ENCODE measurements at regions of chr6 and their contacts with region 1.

Region 1: DNA sequence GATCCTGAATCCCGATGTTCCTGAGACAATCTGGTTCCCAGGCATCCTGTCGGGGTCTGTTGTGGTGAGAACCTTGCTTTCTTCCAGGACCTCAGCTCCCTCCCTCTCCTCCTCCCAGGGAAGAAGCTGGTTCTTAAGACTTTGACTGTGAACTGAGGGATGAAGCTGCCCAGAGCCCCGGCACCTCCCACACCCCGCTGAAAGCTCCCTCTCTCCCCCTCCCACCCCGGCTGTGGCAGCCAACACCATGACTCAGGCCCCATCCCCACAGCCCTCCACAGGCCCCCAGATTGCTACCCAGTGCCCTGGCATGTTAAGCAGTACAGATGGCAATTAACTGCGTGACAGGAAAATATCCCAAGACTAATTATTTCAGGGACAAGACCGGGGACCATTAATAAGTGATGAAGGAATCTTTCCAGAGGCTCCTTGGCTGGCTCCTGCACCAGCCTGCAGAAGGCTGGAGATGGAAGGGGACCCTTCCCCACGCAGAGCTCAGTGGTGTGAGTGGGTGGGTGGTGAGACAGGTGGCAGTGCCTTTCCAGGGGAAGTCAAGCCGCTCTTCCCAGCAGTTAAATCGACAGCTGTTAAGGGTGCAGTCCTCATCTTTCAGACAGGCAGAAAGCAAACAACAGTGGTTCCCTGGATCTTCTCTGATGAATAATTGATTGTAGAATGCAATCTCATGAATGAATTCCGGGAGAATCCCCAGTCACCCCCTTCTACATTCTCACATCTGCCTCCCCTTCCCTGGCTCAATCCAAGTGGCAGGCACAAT is 237.9 kb downstream of the LRFN2 start:
- DNase-seq: no peak
- ATAC-seq: no peak
- H3K4me3 ChIP-seq: no peak overlapping the region
- H3K27ac ChIP-seq: no peak overlapping the region
- H3K4me1 ChIP-seq: peaks cover 17% of the 10 kb centered on the region
- H3K27me3 ChIP-seq: no peaks in the 10 kb centered on the region
- CTCF ChIP-seq: no peak

Region 2: GRCh38 chr6:40387127-40387870 is 38.0 kb after region 1 on chr6:
- intact Hi-C with region 1: loop called in 1 of 2 experiments (anchors 5 kb)
- DNase-seq: no peak
- ATAC-seq: no peak
- H3K4me3 ChIP-seq: no peak overlapping the region
- H3K27ac ChIP-seq: no peak overlapping the region
- H3K4me1 ChIP-seq: no peaks in the 10 kb centered on the region
- H3K27me3 ChIP-seq: no peaks in the 10 kb centered on the region
- CTCF ChIP-seq: no peak

Region 3: DNA sequence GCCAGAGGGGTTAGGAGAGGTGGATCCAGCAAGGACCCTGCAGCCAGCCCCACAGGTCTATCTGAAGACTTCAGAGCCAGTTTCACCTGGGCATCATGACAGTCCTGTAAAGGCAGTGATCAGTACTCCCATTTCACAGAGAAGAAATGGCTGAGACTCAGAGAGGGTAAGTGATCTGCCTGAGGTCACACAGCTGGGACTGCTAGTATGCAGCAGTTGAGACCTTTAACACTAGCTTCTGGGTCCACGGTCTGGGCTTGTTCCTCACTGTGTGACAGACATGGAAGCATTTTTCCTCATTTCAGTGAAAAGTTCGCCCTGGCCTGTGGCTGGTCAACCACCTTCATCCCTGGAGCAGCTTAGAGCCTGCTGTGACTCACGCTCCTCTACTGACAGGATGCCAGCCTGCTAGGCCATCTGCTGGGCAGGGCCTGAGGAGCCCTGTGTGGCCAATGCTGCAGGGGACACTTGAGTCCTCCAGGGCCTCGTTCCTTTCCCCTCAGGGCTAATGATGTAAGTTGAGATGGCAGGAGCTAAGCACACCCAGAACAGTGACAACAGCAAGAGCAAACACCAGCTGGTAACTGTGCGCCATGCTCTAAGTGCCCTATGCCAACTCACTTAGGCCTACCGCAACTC is 45.9 kb after region 1 on chr6:
- intact Hi-C with region 1: loop called in 1 of 2 experiments (anchors 5 kb)
- DNase-seq: peak; percentile 52 to 88
- ATAC-seq: peak; percentile 92 to 97 (median 97)
- H3K4me3 ChIP-seq: no peak overlapping the region
- H3K27ac ChIP-seq: peak overlapping the region; percentile 61
- H3K4me1 ChIP-seq: peaks cover 7% of the 10 kb centered on the region
- H3K27me3 ChIP-seq: no peaks in the 10 kb centered on the region
- CTCF ChIP-seq: no peak